ENCODE measurements at regions of chr19 and their contacts with region 1.

Region 1: GRCh38 chr19:12890787-12891552 is at the start of gene GCDH:
- DNase-seq: peak; percentile 98
- ATAC-seq: peak; percentile 98
- H3K4me3 Mint-ChIP-seq: peak within 1 kb of the TSS; percentile 100
- H3K27ac Mint-ChIP-seq: peak within 1 kb of the TSS; percentile 90
- H3K4me1 Mint-ChIP-seq: peaks cover 18% of the 10 kb centered on the region
- H3K27me3 Mint-ChIP-seq: no peaks in the 10 kb centered on the region
- total RNA-seq, gene GCDH: 36.2 to 41.1 TPM

Region 2: GRCh38 chr19:12806239-12807081 is 84.5 kb before region 1 on chr19 and contains the start of gene RNASEH2A:
- CTCF ChIA-PET with region 1: interaction called, 3 read pairs
- POLR2A ChIA-PET with region 1: no interaction called
- intact Hi-C with region 1: loop called in 1 of 2 experiments (anchors 1 kb)
- DNase-seq: peak; percentile 94
- ATAC-seq: peak; percentile 93
- H3K4me3 Mint-ChIP-seq: peak within 1 kb of the TSS; percentile 89
- H3K27ac Mint-ChIP-seq: peak within 1 kb of the TSS; percentile 80
- H3K4me1 Mint-ChIP-seq: peaks cover 24% of the 10 kb centered on the region
- H3K27me3 Mint-ChIP-seq: no peaks in the 10 kb centered on the region
- total RNA-seq, gene RNASEH2A: 27.0 to 51.1 TPM

Region 3: GRCh38 chr19:12859546-12859945 is 31.4 kb before region 1 on chr19:
- CTCF ChIA-PET with region 1: no interaction called
- POLR2A ChIA-PET with region 1: no interaction called
- intact Hi-C with region 1: no loop called
- DNase-seq: no peak
- ATAC-seq: no peak
- H3K4me3 Mint-ChIP-seq: no peak overlapping the region
- H3K27ac Mint-ChIP-seq: no peak overlapping the region
- H3K4me1 Mint-ChIP-seq: no peaks in the 10 kb centered on the region
- H3K27me3 Mint-ChIP-seq: no peaks in the 10 kb centered on the region

Region 4: DNA sequence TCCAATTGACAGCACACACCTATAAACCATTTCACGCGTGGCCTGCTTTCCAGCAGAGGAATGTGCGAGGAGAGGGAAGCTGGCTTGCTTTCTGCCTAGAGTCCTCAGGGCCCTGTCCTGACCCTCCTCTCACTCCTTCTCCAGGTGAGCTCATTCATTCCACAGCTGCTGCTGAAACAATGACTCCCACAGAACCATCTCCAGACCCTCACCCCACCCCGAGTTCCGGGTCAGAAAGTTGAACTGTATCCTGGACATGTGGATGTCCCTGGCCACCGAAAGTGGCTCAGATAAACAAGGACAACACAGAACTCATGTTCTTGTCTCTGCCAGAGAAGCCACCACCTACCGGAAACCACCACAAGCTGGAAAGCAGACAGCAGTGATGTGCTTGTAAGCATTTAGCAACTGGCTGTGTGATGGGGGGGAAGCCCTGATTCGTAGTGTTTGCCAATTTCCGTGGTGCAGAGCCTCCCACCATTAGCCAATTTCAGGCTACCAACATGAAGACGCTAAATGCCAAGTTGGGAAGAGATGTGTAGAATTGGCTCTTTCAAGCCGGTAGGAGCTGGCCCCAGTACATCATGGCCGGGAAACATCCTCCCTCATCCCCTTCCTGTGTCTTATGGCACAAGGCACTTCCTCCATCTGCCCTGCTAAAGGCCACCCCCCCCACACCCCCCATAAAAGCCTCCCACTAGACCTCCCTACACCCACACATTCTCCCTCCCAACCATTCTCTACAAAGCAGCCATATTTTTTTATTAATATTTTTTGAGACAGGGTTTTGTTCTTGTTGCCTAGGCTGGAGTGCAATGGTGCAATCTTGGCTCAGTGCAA is 23.1 kb after region 1 on chr19:
- CTCF ChIA-PET with region 1: interaction called, 8 read pairs
- POLR2A ChIA-PET with region 1: interaction called, 7 read pairs
- intact Hi-C with region 1: loop called (anchors 1 kb)
- DNase-seq: peak; percentile 70
- ATAC-seq: peak; percentile 81
- H3K4me3 Mint-ChIP-seq: peak overlapping the region; percentile 36
- H3K27ac Mint-ChIP-seq: peak overlapping the region; percentile 94
- H3K4me1 Mint-ChIP-seq: peaks cover 26% of the 10 kb centered on the region
- H3K27me3 Mint-ChIP-seq: no peaks in the 10 kb centered on the region

Region 5: GRCh38 chr19:12945479-12946091 is 54.6 kb after region 1 on chr19 and contains the start of gene RAD23A:
- CTCF ChIA-PET with region 1: no interaction called
- POLR2A ChIA-PET with region 1: no interaction called
- intact Hi-C with region 1: loop called in 1 of 2 experiments (anchors 1 kb)
- DNase-seq: peak; percentile 100
- ATAC-seq: peak; percentile 81
- H3K4me3 Mint-ChIP-seq: peak within 1 kb of the TSS; percentile 88
- H3K27ac Mint-ChIP-seq: peak within 1 kb of the TSS; percentile 97
- H3K4me1 Mint-ChIP-seq: peaks cover 55% of the 10 kb centered on the region
- H3K27me3 Mint-ChIP-seq: no peaks in the 10 kb centered on the region
- total RNA-seq, gene RAD23A: 189 to 265 TPM

Region 6: DNA sequence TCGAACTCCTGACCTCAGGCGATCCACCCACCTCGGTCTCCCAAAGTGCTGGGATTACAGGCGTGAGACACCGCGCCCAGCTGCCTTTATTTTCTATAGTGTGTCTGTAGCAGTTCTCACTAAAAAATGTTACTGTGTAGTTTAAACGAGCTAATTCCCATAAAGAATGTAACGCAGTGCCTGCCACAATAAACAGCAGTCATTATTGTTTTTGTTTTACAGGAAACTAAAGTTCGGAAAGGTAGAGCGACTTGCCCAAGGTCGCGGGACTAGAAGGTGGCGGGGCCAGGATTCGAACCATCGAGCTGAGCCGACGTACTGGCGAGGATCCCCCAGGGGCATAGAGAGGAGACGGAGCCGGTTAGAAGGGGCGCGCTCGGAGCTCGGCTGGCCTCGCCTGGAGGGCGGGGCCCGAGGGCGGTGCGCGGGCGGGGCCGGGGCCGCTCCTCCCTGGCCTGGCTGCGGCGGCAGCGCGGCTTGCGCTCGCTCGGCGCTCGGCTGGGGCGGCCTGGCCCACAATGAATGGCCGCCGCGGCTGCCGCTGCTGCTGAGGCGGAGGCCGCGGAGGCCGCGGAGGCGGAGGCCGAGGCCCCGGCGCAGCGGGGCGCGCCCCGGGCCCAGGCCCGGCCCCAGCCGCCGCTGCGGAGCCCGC is 226.9 kb after region 1 on chr19 and contains the start of gene NACC1:
- CTCF ChIA-PET with region 1: interaction called, 3 read pairs
- POLR2A ChIA-PET with region 1: no interaction called
- intact Hi-C with region 1: loop called in 1 of 2 experiments (anchors 1 kb)
- DNase-seq: peak; percentile 95
- ATAC-seq: peak; percentile 85
- H3K4me3 Mint-ChIP-seq: peak within 1 kb of the TSS; percentile 87
- H3K27ac Mint-ChIP-seq: peak within 1 kb of the TSS; percentile 95
- H3K4me1 Mint-ChIP-seq: peaks cover 49% of the 10 kb centered on the region
- H3K27me3 Mint-ChIP-seq: no peaks in the 10 kb centered on the region
- total RNA-seq, gene NACC1: 77.5 to 84.5 TPM

Measured in activated CD4-positive, alpha-beta T cell treated with anti-CD3 and anti-CD28 coated beads for 36 hours (primary cell).